ENCODE measurements at regions of chr4 and their contacts with region 1.

Region 1: DNA sequence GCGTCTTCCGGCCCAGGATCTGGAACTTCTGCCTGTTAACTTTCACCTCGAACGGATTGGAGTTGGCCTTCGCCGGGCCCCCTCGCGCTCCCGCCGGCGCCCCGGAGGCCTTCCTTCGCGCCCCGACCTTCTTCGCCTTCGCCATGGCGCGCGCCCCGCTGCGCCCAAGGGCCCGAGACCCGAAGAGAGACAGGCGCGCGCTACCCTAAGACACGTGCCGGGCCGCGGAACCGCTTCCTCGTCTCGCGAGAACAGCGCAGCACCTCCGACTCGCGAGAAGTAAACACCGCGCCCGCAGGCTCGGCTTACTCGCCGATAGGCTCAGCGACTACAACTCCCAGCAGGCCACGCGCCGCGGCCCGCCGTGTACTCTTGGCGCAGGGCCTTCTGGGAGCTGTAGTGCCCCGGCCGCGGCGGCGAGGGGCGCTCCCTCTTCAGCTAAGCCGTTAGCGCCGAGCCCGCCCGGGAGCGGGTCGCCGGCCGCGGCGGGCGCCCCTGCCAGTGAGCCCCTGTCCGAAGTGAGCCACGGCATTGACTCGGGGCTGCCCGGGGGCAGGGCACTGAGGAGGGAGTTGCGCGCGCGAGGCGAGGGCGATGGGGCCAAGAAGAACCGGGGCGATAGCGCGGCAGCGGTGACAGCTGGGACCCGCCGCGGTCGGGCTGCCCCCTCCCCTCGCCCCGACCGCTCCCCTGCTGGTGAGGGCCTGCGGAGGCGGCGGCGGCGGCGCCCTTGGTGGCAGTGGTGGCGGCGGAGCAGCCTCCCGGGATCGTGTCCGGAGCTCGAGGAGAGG is at the starts of genes GRK4 and NOP14:
- DNase-seq: peak; percentile 98
- H3K4me3 ChIP-seq: peak within 1 kb of the TSS; percentile 54 to 84 (median 73)
- H3K27ac ChIP-seq: peak within 1 kb of the TSS; percentile 64
- H3K4me1 ChIP-seq: peaks cover 32% of the 10 kb centered on the region
- H3K27me3 ChIP-seq: no peaks in the 10 kb centered on the region
- CTCF ChIP-seq: peak in 1 of 2 donors; percentile 20
- POLR2A ChIP-seq: peak; percentile 63
- total RNA-seq, gene GRK4: 5.9 and 6.3 TPM in 2 replicates
- total RNA-seq, gene NOP14: 40.3 and 45.2 TPM in 2 replicates

Region 2: GRCh38 chr4:2296631-2297601 is 666.5 kb before region 1 on chr4:
- CTCF ChIA-PET with region 1: no interaction called
- POLR2A ChIA-PET with region 1: no interaction called
- dilution Hi-C with region 1: no loop called
- intact Hi-C with region 1: no loop called
- DNase-seq: no peak
- H3K4me3 ChIP-seq: no peak overlapping the region
- H3K27ac ChIP-seq: no peak overlapping the region
- H3K4me1 ChIP-seq: no peaks in the 10 kb centered on the region
- H3K27me3 ChIP-seq: no peaks in the 10 kb centered on the region
- CTCF ChIP-seq: no peak
- POLR2A ChIP-seq: no peak

Region 3: DNA sequence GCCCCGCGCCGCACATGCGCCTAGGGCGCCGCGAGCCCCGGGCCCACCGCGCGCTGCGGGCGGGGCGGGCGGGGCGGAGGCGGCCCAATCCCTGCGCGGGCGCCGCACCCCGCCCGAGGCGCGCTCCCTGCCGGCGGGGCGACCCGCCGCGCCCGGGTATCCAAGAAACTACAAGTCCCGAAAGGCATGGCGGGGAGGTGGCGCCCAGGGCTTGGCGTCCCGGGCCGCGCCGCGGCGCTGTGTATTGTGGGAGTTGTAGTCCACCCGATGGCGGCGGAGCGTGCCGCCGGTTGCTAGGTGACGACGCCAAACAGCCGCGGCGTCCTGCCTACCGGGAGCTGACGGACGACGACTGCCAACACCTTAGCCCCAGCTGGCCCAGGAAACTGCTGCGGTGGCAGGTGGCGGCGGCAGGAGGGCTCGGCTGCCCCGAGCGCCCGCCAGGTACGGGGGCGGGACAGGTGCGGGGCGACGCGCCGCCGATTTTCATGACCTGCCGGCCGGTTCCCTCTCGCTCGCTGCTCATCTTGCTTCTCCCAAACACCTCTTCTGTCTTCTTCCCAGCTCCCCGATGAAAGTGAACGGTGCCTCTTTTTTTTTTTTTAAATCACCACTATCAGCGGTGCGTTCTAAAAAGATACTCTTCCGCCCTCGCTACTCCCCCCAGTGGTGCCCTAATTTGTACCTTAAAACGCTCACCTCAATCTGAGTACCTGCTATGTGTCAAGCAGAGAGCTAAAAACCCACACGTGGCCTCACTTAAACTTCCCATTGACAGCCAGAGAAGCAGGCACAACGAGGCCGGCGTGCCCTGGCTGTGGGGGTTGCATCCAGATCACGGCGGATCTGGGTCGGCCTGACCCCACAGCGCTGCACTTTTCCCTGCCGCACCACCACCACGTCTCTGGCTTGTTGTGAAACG is 544.5 kb before region 1 on chr4 and contains the start of gene CFAP99:
- CTCF ChIA-PET with region 1: no interaction called
- POLR2A ChIA-PET with region 1: no interaction called
- dilution Hi-C with region 1: no loop called
- intact Hi-C with region 1: loop called (anchors 10 kb)
- DNase-seq: peak; percentile 93
- H3K4me3 ChIP-seq: peak within 1 kb of the TSS; percentile 62 to 78 (median 66)
- H3K27ac ChIP-seq: peak within 1 kb of the TSS; percentile 13
- H3K4me1 ChIP-seq: peaks cover 33% of the 10 kb centered on the region
- H3K27me3 ChIP-seq: peaks cover 19 to 21% of the 10 kb centered on the region in 2 experiments
- CTCF ChIP-seq: peak in 1 of 2 donors; percentile 26
- POLR2A ChIP-seq: no peak
- total RNA-seq, gene CFAP99: 0.12 TPM in 1 of 2 replicates, not detected in the other

Region 4: GRCh38 chr4:2771264-2771663 is 192.1 kb before region 1 on chr4:
- CTCF ChIA-PET with region 1: no interaction called
- POLR2A ChIA-PET with region 1: no interaction called
- dilution Hi-C with region 1: no loop called
- intact Hi-C with region 1: no loop called
- DNase-seq: no peak
- H3K4me3 ChIP-seq: no peak overlapping the region
- H3K27ac ChIP-seq: no peak overlapping the region
- H3K4me1 ChIP-seq: no peaks in the 10 kb centered on the region
- H3K27me3 ChIP-seq: peaks cover 0 to 1% of the 10 kb centered on the region in 2 experiments
- CTCF ChIP-seq: no peak
- POLR2A ChIP-seq: no peak

Region 5: GRCh38 chr4:2948895-2949765 is 14.2 kb before region 1 on chr4:
- CTCF ChIA-PET with region 1: interaction called, 21 read pairs
- POLR2A ChIA-PET with region 1: interaction called, 4 read pairs
- dilution Hi-C with region 1: no loop called
- intact Hi-C with region 1: no loop called
- DNase-seq: peak; percentile 19
- H3K4me3 ChIP-seq: no peak overlapping the region
- H3K27ac ChIP-seq: no peak overlapping the region
- H3K4me1 ChIP-seq: no peaks in the 10 kb centered on the region
- H3K27me3 ChIP-seq: no peaks in the 10 kb centered on the region
- CTCF ChIP-seq: peak; percentile 31 to 65
- POLR2A ChIP-seq: no peak

Region 6: GRCh38 chr4:2977211-2978088 is 14.1 kb after region 1 on chr4:
- CTCF ChIA-PET with region 1: interaction called, 28 read pairs
- POLR2A ChIA-PET with region 1: interaction called, 4 read pairs
- dilution Hi-C with region 1: no loop called
- intact Hi-C with region 1: no loop called
- DNase-seq: no peak
- H3K4me3 ChIP-seq: no peak overlapping the region
- H3K27ac ChIP-seq: no peak overlapping the region
- H3K4me1 ChIP-seq: no peaks in the 10 kb centered on the region
- H3K27me3 ChIP-seq: peaks cover 0 to 3% of the 10 kb centered on the region in 2 experiments
- CTCF ChIP-seq: no peak
- POLR2A ChIP-seq: no peak

Region 7: GRCh38 chr4:3037957-3038461 is 74.6 kb after region 1 on chr4:
- CTCF ChIA-PET with region 1: interaction called, 5 read pairs
- POLR2A ChIA-PET with region 1: no interaction called
- dilution Hi-C with region 1: no loop called
- intact Hi-C with region 1: loop called (anchors 5 kb)
- DNase-seq: no peak
- H3K4me3 ChIP-seq: no peak overlapping the region
- H3K27ac ChIP-seq: no peak overlapping the region
- H3K4me1 ChIP-seq: peaks cover 7% of the 10 kb centered on the region
- H3K27me3 ChIP-seq: no peaks in the 10 kb centered on the region
- CTCF ChIP-seq: no peak
- POLR2A ChIP-seq: no peak

Region 8: GRCh38 chr4:3098346-3098745 is 135.0 kb after region 1 on chr4:
- CTCF ChIA-PET with region 1: no interaction called
- POLR2A ChIA-PET with region 1: no interaction called
- dilution Hi-C with region 1: no loop called
- intact Hi-C with region 1: no loop called
- DNase-seq: no peak
- H3K4me3 ChIP-seq: no peak overlapping the region
- H3K27ac ChIP-seq: no peak overlapping the region
- H3K4me1 ChIP-seq: no peaks in the 10 kb centered on the region
- H3K27me3 ChIP-seq: no peaks in the 10 kb centered on the region
- CTCF ChIP-seq: no peak
- POLR2A ChIP-seq: no peak